Activated CD4-positive, alpha-beta memory T cell treated with anti-CD3 and anti-CD28 coated beads, Interleukin-2, amount 10 ng/mL, durations not matched to agents 7 days and 5 days (primary cell): ENCODE measurements at regions of chr5 and their contacts with region 1.

Region 1: DNA sequence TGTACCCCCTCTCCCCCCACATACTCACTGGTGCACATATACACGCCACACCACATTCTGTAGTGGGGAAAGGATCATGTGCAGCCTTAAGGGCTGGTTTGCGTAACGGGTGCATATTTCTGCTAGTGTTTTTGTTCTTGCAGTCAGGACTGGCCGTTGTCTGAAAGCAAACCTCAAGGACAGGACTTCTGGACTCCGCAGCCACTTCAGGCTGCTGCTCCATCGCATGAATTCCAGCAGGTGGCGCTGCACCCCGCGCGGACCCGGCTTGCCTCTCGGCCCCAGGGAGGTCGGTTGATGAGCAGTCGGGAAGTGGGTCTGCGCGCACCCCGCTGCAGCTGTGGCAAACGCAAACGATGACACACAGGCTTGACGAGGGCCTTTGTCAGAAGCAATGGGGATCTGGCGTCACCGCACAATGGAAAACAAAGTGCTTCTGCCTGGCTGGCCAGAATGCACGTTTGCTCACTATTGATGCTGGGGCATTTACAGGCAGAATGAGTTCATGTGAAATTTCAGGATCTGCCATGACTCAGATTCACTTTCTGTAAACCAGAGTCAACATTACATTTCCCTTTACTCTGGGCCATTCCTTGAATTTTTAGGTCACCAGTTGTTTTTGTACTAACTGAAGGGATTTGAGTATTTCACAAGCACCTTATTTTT is 36.3 kb upstream of the GLRX start:
- DNase-seq: peak; percentile 92
- H3K4me3 Mint-ChIP-seq: peak overlapping the region; percentile 43
- H3K27ac Mint-ChIP-seq: peak overlapping the region; percentile 28
- H3K4me1 Mint-ChIP-seq: peaks cover 50% of the 10 kb centered on the region
- H3K27me3 Mint-ChIP-seq: no peaks in the 10 kb centered on the region

Region 2: GRCh38 chr5:95486191-95486590 is 372.6 kb before region 1 on chr5:
- CTCF ChIA-PET with region 1: no interaction called
- POLR2A ChIA-PET with region 1: no interaction called
- DNase-seq: no peak
- H3K4me3 Mint-ChIP-seq: no peak overlapping the region
- H3K27ac Mint-ChIP-seq: no peak overlapping the region
- H3K4me1 Mint-ChIP-seq: no peaks in the 10 kb centered on the region
- H3K27me3 Mint-ChIP-seq: no peaks in the 10 kb centered on the region

Region 3: GRCh38 chr5:95870105-95870672 is 11.4 kb after region 1 on chr5:
- CTCF ChIA-PET with region 1: interaction called, 39 read pairs
- POLR2A ChIA-PET with region 1: interaction called, 7 read pairs
- DNase-seq: peak; percentile 37
- H3K4me3 Mint-ChIP-seq: peak overlapping the region; percentile 62
- H3K27ac Mint-ChIP-seq: peak overlapping the region; percentile 89
- H3K4me1 Mint-ChIP-seq: peaks cover 47% of the 10 kb centered on the region
- H3K27me3 Mint-ChIP-seq: no peaks in the 10 kb centered on the region